B cell (primary cell): ENCODE measurements at regions of chr9 and their contacts with region 1.

Region 1: GRCh38 chr9:36190388-36191287 is at the start of gene CLTA:
- DNase-seq: peak; percentile 97
- ATAC-seq: peak; percentile 97
- H3K4me3 ChIP-seq: peak within 1 kb of the TSS; percentile 66 to 96 (median 91)
- H3K4me3 Mint-ChIP-seq: peak within 1 kb of the TSS; percentile 91
- H3K27ac ChIP-seq: peak within 1 kb of the TSS; percentile 76 to 93
- H3K27ac Mint-ChIP-seq: peak within 1 kb of the TSS; percentile 88
- H3K4me1 ChIP-seq: peaks cover 32 to 43% of the 10 kb centered on the region in 2 donors
- H3K4me1 Mint-ChIP-seq: peaks cover 53% of the 10 kb centered on the region
- H3K27me3 ChIP-seq: no peaks in the 10 kb centered on the region
- H3K27me3 Mint-ChIP-seq: no peaks in the 10 kb centered on the region
- CTCF ChIP-seq: peak; percentile 62
- total RNA-seq, gene CLTA: 71.0 and 73.0 TPM in 2 replicates

Region 2: DNA sequence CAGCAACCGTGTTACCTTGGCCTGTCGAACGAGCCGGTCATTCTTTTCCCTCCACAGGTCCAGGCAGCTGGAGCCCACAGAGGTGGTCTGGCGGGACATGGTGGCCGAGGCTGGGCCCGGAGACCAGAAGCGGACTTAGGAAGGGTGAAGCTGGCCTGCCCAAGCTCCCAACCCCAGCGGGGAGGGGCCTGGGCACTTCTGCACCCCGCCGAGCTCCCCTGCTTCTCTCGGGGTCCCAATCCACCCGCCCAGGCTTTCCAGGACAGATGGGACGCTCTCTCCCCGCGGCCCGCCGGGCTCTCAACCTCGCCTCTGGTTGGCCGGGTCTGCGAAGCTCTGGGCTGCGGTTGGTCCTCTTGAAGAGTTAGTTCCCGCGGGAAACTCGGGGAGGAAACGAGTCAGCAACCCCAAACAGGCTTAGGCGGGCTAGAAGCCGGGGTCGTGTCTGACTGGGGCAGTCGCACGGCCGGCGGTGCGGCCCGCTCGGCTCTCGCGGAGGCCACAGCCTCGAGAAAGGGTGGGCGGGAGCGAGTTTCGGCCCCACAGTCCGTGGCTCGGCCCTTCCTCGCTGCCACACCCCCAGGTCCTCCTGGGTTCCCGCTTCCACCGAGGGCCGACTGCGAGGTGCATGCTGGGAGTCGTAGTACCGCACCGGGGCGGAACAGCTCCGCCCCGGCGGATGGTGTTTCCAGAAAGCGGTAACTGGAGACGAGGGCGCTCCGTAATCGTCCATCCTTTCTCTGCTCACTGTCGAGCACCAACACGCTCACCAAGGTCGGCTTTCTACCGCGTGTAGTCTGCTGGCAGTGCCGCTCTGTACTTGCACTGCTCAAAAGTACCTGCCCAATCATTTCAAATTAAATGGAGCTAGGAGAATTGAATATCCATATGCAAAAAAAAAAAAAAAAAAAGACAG is 1111.0 kb before region 1 on chr9 and contains the start of gene FANCG:
- CTCF ChIA-PET with region 1: interaction called, 3 read pairs
- POLR2A ChIA-PET with region 1: interaction called, 11 read pairs
- intact Hi-C with region 1: no loop called
- DNase-seq: peak; percentile 88
- ATAC-seq: peak; percentile 93
- H3K4me3 ChIP-seq: peak within 1 kb of the TSS; percentile 75 to 93 (median 82)
- H3K4me3 Mint-ChIP-seq: peak within 1 kb of the TSS; percentile 92
- H3K27ac ChIP-seq: peak within 1 kb of the TSS; percentile 25 to 50
- H3K27ac Mint-ChIP-seq: peak within 1 kb of the TSS; percentile 84
- H3K4me1 ChIP-seq: peaks cover 12 to 16% of the 10 kb centered on the region in 2 donors
- H3K4me1 Mint-ChIP-seq: peaks cover 18% of the 10 kb centered on the region
- H3K27me3 ChIP-seq: no peaks in the 10 kb centered on the region
- H3K27me3 Mint-ChIP-seq: no peaks in the 10 kb centered on the region
- CTCF ChIP-seq: no peak
- total RNA-seq, gene FANCG: 38.9 and 40.1 TPM in 2 replicates

Region 3: DNA sequence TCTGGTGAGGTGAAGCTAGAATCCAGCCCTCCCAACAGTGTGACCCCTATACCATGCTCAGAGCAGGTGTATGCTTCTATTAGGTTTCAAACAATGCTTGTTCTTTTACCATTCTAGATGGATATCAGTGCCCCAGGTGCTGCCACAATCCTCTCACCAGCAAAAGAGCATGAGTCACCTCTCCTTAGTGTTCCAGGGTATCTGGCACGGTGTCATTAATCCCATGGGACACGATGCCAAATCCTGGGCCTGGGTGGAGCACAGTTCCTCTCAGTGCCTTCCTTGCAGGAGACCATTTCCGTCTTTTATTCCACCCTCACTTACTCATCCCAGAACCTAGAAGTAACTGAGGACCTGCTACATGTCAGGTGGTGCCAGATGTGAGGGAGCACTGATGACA is 319.1 kb before region 1 on chr9:
- CTCF ChIA-PET with region 1: no interaction called
- POLR2A ChIA-PET with region 1: no interaction called
- intact Hi-C with region 1: no loop called
- DNase-seq: no peak
- ATAC-seq: no peak
- H3K4me3 ChIP-seq: no peak overlapping the region
- H3K4me3 Mint-ChIP-seq: no peak overlapping the region
- H3K27ac ChIP-seq: no peak overlapping the region
- H3K27ac Mint-ChIP-seq: no peak overlapping the region
- H3K4me1 ChIP-seq: no peaks in the 10 kb centered on the region
- H3K4me1 Mint-ChIP-seq: no peaks in the 10 kb centered on the region
- H3K27me3 ChIP-seq: no peaks in the 10 kb centered on the region
- H3K27me3 Mint-ChIP-seq: peaks cover 7% of the 10 kb centered on the region
- CTCF ChIP-seq: no peak

Region 4: GRCh38 chr9:36102742-36103495 is 87.7 kb before region 1 on chr9:
- CTCF ChIA-PET with region 1: interaction called, 24 read pairs
- POLR2A ChIA-PET with region 1: no interaction called
- intact Hi-C with region 1: loop called (anchors 1 kb)
- DNase-seq: peak; percentile 88
- ATAC-seq: peak; percentile 99
- H3K4me3 ChIP-seq: no peak overlapping the region
- H3K4me3 Mint-ChIP-seq: no peak overlapping the region
- H3K27ac ChIP-seq: no peak overlapping the region
- H3K27ac Mint-ChIP-seq: no peak overlapping the region
- H3K4me1 ChIP-seq: peaks cover 0 to 3% of the 10 kb centered on the region in 2 donors
- H3K4me1 Mint-ChIP-seq: peaks cover 5% of the 10 kb centered on the region
- H3K27me3 ChIP-seq: no peaks in the 10 kb centered on the region
- H3K27me3 Mint-ChIP-seq: no peaks in the 10 kb centered on the region
- CTCF ChIP-seq: peak; percentile 90

Region 5: DNA sequence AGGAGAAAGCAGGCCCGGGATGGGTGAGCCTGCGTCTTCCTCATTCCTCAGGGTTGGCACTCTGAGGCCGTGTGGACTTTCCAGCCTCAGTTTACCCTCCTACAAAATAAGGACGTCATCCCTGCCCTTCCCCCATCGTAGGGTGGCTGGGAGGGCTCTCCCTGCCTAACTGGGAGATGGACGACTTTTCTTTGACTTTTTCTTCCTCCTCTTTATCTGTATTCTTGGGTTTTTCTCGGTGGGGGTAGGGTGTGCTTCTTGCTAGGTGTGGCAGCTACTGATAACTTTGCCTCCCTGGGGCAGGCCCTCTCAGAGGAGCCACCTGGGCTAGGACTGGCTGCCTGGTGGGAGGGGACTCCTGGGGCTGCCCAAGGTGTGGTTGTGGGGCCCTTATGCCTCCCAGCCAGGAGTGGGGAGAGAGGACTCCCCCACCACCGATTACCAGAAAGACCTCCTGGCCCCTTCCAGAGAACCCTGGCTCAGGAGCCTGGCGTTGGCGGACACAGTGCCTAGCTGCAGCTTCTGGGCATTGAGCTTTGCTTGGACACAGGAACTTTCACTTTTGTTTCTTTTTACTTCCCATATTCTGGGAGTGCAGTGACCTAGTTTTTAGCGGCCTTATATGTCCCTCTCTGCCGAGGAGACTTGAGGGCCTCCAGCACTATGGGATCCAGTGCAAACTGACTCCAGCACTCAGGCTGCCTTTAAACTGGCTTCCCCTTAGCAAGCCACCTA is 48.0 kb before region 1 on chr9:
- CTCF ChIA-PET with region 1: interaction called, 17 read pairs
- POLR2A ChIA-PET with region 1: interaction called, 7 read pairs
- intact Hi-C with region 1: loop called (anchors 2 kb)
- DNase-seq: peak; percentile 62
- ATAC-seq: peak; percentile 54
- H3K4me3 ChIP-seq: peak overlapping the region; percentile 43 to 83 (median 80)
- H3K4me3 Mint-ChIP-seq: peak overlapping the region; percentile 93
- H3K27ac ChIP-seq: peak overlapping the region; percentile 85 to 92
- H3K27ac Mint-ChIP-seq: peak overlapping the region; percentile 99
- H3K4me1 ChIP-seq: peaks cover 63 to 78% of the 10 kb centered on the region in 2 donors
- H3K4me1 Mint-ChIP-seq: peaks cover 93% of the 10 kb centered on the region
- H3K27me3 ChIP-seq: no peaks in the 10 kb centered on the region
- H3K27me3 Mint-ChIP-seq: no peaks in the 10 kb centered on the region
- CTCF ChIP-seq: no peak

Region 6: DNA sequence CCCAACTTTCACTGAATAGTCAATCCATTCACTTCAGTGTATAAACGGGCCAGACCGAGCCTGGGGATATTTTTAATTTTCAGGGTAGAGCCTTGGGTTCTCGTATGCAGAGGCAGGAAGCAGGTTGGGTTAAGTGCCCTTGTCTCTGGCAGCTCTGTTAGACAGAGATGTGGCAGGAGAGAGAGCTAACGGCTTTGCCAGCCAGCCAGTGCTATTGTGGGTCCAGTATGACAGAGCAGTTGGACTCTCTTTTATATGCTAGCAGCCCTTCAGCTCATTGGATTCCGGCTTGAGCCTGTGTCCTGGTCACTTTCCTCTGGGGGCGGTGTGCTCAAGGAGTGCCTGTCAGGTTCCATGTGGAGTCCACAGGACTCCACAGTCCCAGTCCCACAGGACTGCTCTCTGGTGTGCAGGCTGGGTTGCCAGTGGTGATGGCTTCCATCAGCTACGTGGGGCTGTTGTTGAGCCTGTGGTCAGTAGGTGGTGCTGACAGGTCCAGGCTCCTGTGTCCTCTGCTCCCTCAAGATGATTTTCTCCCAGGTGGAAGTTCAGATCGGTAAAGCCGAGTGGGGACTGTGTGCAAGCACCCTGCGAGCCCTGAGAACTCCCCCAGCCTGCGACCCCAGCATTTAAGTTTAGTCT is 14.4 kb after region 1 on chr9:
- CTCF ChIA-PET with region 1: interaction called, 16 read pairs
- POLR2A ChIA-PET with region 1: no interaction called
- intact Hi-C with region 1: no loop called
- DNase-seq: no peak
- ATAC-seq: no peak
- H3K4me3 ChIP-seq: no peak overlapping the region
- H3K4me3 Mint-ChIP-seq: no peak overlapping the region
- H3K27ac ChIP-seq: no peak overlapping the region
- H3K27ac Mint-ChIP-seq: no peak overlapping the region
- H3K4me1 ChIP-seq: no peaks in the 10 kb centered on the region
- H3K4me1 Mint-ChIP-seq: peaks cover 7% of the 10 kb centered on the region
- H3K27me3 ChIP-seq: no peaks in the 10 kb centered on the region
- H3K27me3 Mint-ChIP-seq: no peaks in the 10 kb centered on the region
- CTCF ChIP-seq: no peak

Region 7: DNA sequence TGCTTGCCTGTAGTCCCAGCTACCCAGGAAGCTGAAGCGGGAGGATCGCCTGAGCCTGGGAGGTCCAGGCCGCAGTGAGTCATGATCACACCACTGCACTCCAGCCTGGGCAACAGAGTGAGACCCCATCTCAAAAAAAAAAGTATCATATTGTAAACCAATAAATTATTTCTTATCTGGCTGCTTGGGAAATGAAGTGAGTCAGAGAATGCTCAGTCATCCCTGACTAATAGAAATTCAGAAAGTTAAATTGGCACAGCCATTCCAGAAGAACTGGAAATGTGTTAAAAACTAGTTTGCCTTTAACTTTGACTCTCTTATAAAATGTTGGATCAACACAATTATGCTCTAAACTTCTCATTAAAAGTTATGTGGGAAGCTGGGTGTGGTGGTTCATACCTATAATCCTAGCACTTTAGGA is 77.4 kb after region 1 on chr9:
- CTCF ChIA-PET with region 1: no interaction called
- POLR2A ChIA-PET with region 1: no interaction called
- intact Hi-C with region 1: no loop called
- DNase-seq: no peak
- ATAC-seq: no peak
- H3K4me3 ChIP-seq: no peak overlapping the region
- H3K4me3 Mint-ChIP-seq: no peak overlapping the region
- H3K27ac ChIP-seq: no peak overlapping the region
- H3K27ac Mint-ChIP-seq: no peak overlapping the region
- H3K4me1 ChIP-seq: no peaks in the 10 kb centered on the region
- H3K4me1 Mint-ChIP-seq: no peaks in the 10 kb centered on the region
- H3K27me3 ChIP-seq: no peaks in the 10 kb centered on the region
- H3K27me3 Mint-ChIP-seq: no peaks in the 10 kb centered on the region
- CTCF ChIP-seq: no peak

Region 8: GRCh38 chr9:36328798-36329411 is 138.3 kb after region 1 on chr9:
- CTCF ChIA-PET with region 1: interaction called, 23 read pairs
- POLR2A ChIA-PET with region 1: no interaction called
- intact Hi-C with region 1: loop called (anchors 2 kb)
- DNase-seq: peak; percentile 76
- ATAC-seq: peak; percentile 31
- H3K4me3 ChIP-seq: no peak overlapping the region
- H3K4me3 Mint-ChIP-seq: no peak overlapping the region
- H3K27ac ChIP-seq: no peak overlapping the region
- H3K27ac Mint-ChIP-seq: no peak overlapping the region
- H3K4me1 ChIP-seq: no peaks in the 10 kb centered on the region
- H3K4me1 Mint-ChIP-seq: peaks cover 2% of the 10 kb centered on the region
- H3K27me3 ChIP-seq: no peaks in the 10 kb centered on the region
- H3K27me3 Mint-ChIP-seq: no peaks in the 10 kb centered on the region
- CTCF ChIP-seq: peak; percentile 85

Region 9: GRCh38 chr9:36357639-36358038 is 167.0 kb after region 1 on chr9:
- CTCF ChIA-PET with region 1: no interaction called
- POLR2A ChIA-PET with region 1: no interaction called
- intact Hi-C with region 1: no loop called
- DNase-seq: no peak
- ATAC-seq: no peak
- H3K4me3 ChIP-seq: no peak overlapping the region
- H3K4me3 Mint-ChIP-seq: no peak overlapping the region
- H3K27ac ChIP-seq: no peak overlapping the region
- H3K27ac Mint-ChIP-seq: no peak overlapping the region
- H3K4me1 ChIP-seq: no peaks in the 10 kb centered on the region
- H3K4me1 Mint-ChIP-seq: no peaks in the 10 kb centered on the region
- H3K27me3 ChIP-seq: no peaks in the 10 kb centered on the region
- H3K27me3 Mint-ChIP-seq: no peaks in the 10 kb centered on the region
- CTCF ChIP-seq: no peak

Region 10: DNA sequence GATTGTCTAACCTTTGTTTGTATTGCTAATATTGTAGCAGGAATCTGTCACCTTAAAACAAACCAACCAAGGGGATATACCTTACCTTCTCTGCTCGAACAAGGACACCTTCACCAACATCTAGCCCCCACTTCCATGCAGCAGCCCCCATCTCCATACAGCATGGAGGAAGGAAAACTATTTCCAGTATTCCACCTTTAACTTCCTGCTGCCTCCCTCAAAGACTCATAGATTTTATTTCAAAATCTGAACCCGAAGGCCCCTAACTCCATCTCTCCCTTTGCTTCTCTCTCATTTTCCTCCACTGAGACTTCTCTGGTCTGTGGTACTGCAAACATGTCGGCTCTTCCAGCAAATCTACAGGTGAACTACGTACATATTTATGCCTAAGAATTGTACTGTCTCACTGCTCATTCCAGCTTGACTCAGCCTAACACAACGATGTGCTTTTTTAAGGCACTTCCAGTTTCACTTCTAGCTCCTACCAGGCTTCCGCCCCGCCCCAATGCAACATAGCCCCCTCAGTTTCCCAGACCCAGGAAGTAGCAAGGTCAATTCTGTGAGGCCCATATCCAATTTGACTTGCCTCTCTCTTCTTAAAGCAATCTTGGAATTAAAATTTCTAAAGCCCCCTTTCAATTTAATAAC is 280.1 kb after region 1 on chr9:
- CTCF ChIA-PET with region 1: no interaction called
- POLR2A ChIA-PET with region 1: no interaction called
- intact Hi-C with region 1: loop called (anchors 5 kb)
- DNase-seq: peak; percentile 79
- ATAC-seq: peak; percentile 96
- H3K4me3 ChIP-seq: peak overlapping the region; percentile 30 to 63 (median 48)
- H3K4me3 Mint-ChIP-seq: peak overlapping the region; percentile 83
- H3K27ac ChIP-seq: peak overlapping the region; percentile 85 to 95
- H3K27ac Mint-ChIP-seq: peak overlapping the region; percentile 87
- H3K4me1 ChIP-seq: peaks cover 19 to 24% of the 10 kb centered on the region in 2 donors
- H3K4me1 Mint-ChIP-seq: peaks cover 35% of the 10 kb centered on the region
- H3K27me3 ChIP-seq: no peaks in the 10 kb centered on the region
- H3K27me3 Mint-ChIP-seq: no peaks in the 10 kb centered on the region
- CTCF ChIP-seq: no peak